ENCODE measurements at regions of chr3 and their contacts with region 1.

Region 1: GRCh38 chr3:143674100-143674968 is 173.9 kb downstream of the SLC9A9 start:
- DNase-seq: peak; percentile 11 to 90 (median 66)

Region 2: GRCh38 chr3:143037867-143038266 is 636.5 kb before region 1 on chr3:
- intact Hi-C with region 1: loop called (anchors 10 kb)
- DNase-seq: no peak

Region 3: GRCh38 chr3:143121241-143122088 is 552.9 kb before region 1 on chr3:
- intact Hi-C with region 1: loop called (anchors 10 kb)
- DNase-seq: peak; percentile 20 to 94 (median 58)

Measured in posterior cingulate gyrus (tissue), 11 donors.